Activated CD8-positive, alpha-beta memory T cell treated with anti-CD3 and anti-CD28 coated beads, Interleukin-2, amount 10 ng/mL, durations not matched to agents 7 days and 5 days (primary cell): ENCODE measurements at regions of chr20 and their contacts with region 1.

Region 1: GRCh38 chr20:45293041-45294002 is 13.3 kb upstream of the RBPJL start:
- DNase-seq: peak; percentile 88
- ATAC-seq: peak; percentile 94
- H3K4me3 Mint-ChIP-seq: peak overlapping the region; percentile 65
- H3K27ac Mint-ChIP-seq: no peak overlapping the region
- H3K4me1 Mint-ChIP-seq: peaks cover 5% of the 10 kb centered on the region
- H3K27me3 Mint-ChIP-seq: peaks cover 49% of the 10 kb centered on the region

Region 2: DNA sequence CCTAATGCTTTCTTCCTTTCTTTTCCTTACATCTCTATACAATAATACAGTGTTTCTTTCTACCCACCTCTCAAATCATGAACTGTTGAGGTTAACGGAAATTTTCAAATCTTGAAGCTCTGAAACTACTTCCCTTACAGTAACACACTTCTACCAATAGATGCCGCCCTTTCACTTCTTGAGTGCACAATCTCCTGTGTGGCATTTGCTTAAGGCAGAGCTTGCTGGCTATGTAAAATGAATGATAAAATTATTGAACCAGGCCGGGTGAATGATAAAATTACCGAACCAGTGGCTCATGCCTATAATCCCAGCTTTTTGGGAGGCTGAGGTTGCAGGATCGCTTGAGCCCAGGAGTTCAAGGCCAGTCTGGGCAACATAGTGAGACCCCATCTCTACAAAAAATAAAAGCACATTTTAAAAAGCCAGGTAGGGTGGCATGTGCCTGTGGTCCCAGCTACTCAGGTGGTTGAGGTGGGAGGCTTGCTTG is 249.2 kb before region 1 on chr20:
- CTCF ChIA-PET with region 1: interaction called, 21 read pairs
- DNase-seq: peak; percentile 66
- ATAC-seq: peak; percentile 87
- H3K4me3 Mint-ChIP-seq: no peak overlapping the region
- H3K27ac Mint-ChIP-seq: peak overlapping the region; percentile 83
- H3K4me1 Mint-ChIP-seq: peaks cover 50% of the 10 kb centered on the region
- H3K27me3 Mint-ChIP-seq: no peaks in the 10 kb centered on the region

Region 3: GRCh38 chr20:45095753-45096371 is 197.5 kb before region 1 on chr20:
- CTCF ChIA-PET with region 1: interaction called, 84 read pairs
- DNase-seq: peak; percentile 72
- ATAC-seq: peak; percentile 59
- H3K4me3 Mint-ChIP-seq: no peak overlapping the region
- H3K27ac Mint-ChIP-seq: no peak overlapping the region
- H3K4me1 Mint-ChIP-seq: peaks cover 16% of the 10 kb centered on the region
- H3K27me3 Mint-ChIP-seq: peaks cover 34% of the 10 kb centered on the region

Region 4: GRCh38 chr20:45138561-45139300 is 154.6 kb before region 1 on chr20:
- CTCF ChIA-PET with region 1: interaction called, 43 read pairs
- DNase-seq: peak; percentile 77
- ATAC-seq: peak; percentile 55
- H3K4me3 Mint-ChIP-seq: no peak overlapping the region
- H3K27ac Mint-ChIP-seq: no peak overlapping the region
- H3K4me1 Mint-ChIP-seq: no peaks in the 10 kb centered on the region
- H3K27me3 Mint-ChIP-seq: peaks cover 9% of the 10 kb centered on the region

Region 5: GRCh38 chr20:45206746-45207145 is 86.6 kb before region 1 on chr20 and contains the start of gene SEMG1:
- CTCF ChIA-PET with region 1: no interaction called
- DNase-seq: no peak
- ATAC-seq: no peak
- H3K4me3 Mint-ChIP-seq: no peak within 1 kb of the TSS
- H3K27ac Mint-ChIP-seq: no peak within 1 kb of the TSS
- H3K4me1 Mint-ChIP-seq: no peaks in the 10 kb centered on the region
- H3K27me3 Mint-ChIP-seq: peaks cover 47% of the 10 kb centered on the region
- total RNA-seq, gene SEMG1: not detected

Region 6: GRCh38 chr20:45311589-45312211 is 18.4 kb after region 1 on chr20:
- CTCF ChIA-PET with region 1: interaction called, 73 read pairs
- DNase-seq: peak; percentile 77
- ATAC-seq: peak; percentile 79
- H3K4me3 Mint-ChIP-seq: no peak overlapping the region
- H3K27ac Mint-ChIP-seq: no peak overlapping the region
- H3K4me1 Mint-ChIP-seq: peaks cover 17% of the 10 kb centered on the region
- H3K27me3 Mint-ChIP-seq: peaks cover 43% of the 10 kb centered on the region

Region 7: GRCh38 chr20:45392733-45393132 is 99.4 kb after region 1 on chr20:
- CTCF ChIA-PET with region 1: no interaction called
- DNase-seq: no peak
- ATAC-seq: no peak
- H3K4me3 Mint-ChIP-seq: no peak overlapping the region
- H3K27ac Mint-ChIP-seq: no peak overlapping the region
- H3K4me1 Mint-ChIP-seq: peaks cover 7% of the 10 kb centered on the region
- H3K27me3 Mint-ChIP-seq: no peaks in the 10 kb centered on the region

Region 8: GRCh38 chr20:45436732-45437391 is 143.5 kb after region 1 on chr20:
- CTCF ChIA-PET with region 1: interaction called, 10 read pairs
- DNase-seq: peak; percentile 91
- ATAC-seq: peak; percentile 100
- H3K4me3 Mint-ChIP-seq: peak overlapping the region; percentile 81
- H3K27ac Mint-ChIP-seq: peak overlapping the region; percentile 58
- H3K4me1 Mint-ChIP-seq: peaks cover 25% of the 10 kb centered on the region
- H3K27me3 Mint-ChIP-seq: no peaks in the 10 kb centered on the region

Region 9: GRCh38 chr20:45771182-45771759 is 477.9 kb after region 1 on chr20:
- CTCF ChIA-PET with region 1: interaction called, 14 read pairs
- DNase-seq: peak; percentile 83
- ATAC-seq: peak; percentile 82
- H3K4me3 Mint-ChIP-seq: no peak overlapping the region
- H3K27ac Mint-ChIP-seq: no peak overlapping the region
- H3K4me1 Mint-ChIP-seq: peaks cover 5% of the 10 kb centered on the region
- H3K27me3 Mint-ChIP-seq: peaks cover 32% of the 10 kb centered on the region